ENCODE measurements at regions of chr3 and their contacts with region 1.

Region 1: DNA sequence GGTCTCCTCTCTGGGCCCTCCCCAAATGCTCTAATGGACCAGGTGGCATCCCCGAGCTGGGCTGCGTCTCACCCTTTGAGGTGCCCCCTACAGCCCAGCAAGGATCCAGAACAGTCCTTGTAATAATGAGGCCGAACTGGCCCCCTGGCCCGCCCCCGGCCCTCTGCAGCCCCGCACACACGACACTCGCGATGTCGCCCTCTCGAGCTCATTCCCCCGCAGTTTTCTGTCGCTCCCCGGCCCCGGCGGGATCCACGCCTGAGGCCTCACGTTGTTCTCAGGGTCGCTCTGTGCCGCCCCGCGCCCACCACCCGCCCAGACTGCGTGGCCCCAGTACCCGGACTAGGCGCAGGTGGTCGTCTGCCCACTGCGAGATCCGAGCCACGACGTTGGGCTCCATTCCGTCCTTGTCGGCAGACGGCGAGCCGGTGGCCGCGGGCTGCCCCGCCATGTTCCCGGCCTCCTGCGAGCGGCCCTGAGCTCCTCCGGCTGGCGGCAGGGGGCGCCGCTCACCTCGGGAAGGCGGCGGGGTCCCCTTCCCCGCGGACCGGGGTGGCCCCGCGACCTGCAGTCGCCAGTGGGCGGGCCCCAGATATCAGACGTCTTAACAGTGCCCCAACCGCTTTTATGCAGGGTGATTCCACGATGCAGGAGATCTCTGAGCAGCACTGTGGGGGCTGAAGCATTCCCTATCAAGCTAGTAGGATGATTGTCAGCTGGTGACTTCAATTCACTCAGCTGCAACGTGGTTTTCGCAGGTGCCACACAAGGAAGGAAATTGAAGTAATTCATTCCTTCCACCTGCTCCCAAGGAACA is at the start of gene C3orf33:
- DNase-seq: no peak
- ATAC-seq: peak; percentile 99
- H3K4me3 ChIP-seq: peak within 1 kb of the TSS; percentile 68
- H3K27ac ChIP-seq: 0 out of 2 replicates have a peak within 1 kb of the TSS, but pooled peaks have one; percentile 56
- H3K4me1 ChIP-seq: peaks cover 3% of the 10 kb centered on the region; the same call in 1 of the 2 replicates
- H3K27me3 ChIP-seq: no peaks in the 10 kb centered on the region; a peak in 1 of 4 replicates
- CTCF ChIP-seq: peak; percentile 84 to 96 (median 86)
- EP300 ChIP-seq: no peak
- POLR2A ChIP-seq: peak; percentile 90
- RAD21 ChIP-seq: peak; percentile 73
- polyA plus RNA-seq, gene C3orf33: 0.35 to 1.7 TPM

Region 2: DNA sequence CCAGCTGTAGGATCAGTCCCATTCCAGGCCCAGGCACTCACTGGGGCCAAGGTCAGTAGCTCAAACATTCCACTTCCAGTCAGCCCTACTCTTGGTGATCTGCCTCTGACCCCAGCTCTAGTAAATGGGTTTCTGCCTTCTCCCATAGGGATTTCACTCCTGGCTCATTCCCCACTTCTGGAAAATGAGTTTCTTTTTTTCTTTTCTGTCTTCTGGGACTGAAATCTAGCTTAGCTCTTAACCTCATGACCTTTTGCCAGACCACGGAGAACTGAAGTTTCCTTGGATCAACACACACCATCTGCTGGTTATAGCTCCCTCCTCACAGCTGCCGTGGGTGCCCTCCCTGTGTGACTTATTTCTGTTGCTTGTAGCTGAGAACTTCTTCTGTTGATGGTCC is 704.6 kb before region 1 on chr3:
- CTCF ChIA-PET with region 1: no interaction called
- POLR2A ChIA-PET with region 1: no interaction called
- RAD21 ChIA-PET with region 1: no interaction called
- SMC1A ChIA-PET with region 1: no interaction called
- in situ Hi-C with region 1: no loop called
- intact Hi-C with region 1: no loop called
- DNase-seq: no peak
- ATAC-seq: no peak
- H3K4me3 ChIP-seq: no peak overlapping the region
- H3K27ac ChIP-seq: no peak overlapping the region
- H3K4me1 ChIP-seq: no peaks in the 10 kb centered on the region
- H3K27me3 ChIP-seq: no peaks in the 10 kb centered on the region
- CTCF ChIP-seq: no peak
- EP300 ChIP-seq: no peak
- POLR2A ChIP-seq: no peak
- RAD21 ChIP-seq: no peak

Region 3: DNA sequence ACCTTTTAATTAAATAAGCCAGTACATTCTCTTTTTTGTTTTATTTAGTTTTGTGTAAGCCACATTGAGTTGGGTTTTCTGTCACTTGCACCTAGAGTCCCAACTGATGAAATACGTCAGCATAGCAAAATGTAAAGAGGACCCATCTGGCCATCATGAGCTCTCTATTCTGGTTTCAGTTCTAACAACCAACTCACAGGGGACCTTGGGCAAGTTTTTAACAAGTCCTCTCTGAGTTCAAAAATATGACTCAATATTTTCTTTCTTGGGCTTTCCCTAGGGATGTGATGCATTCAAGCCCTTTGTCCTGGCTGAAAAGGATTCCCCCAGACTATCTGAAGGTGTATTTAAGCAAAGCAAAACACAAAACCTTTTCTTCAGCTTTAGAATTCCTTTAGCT is 94.0 kb before region 1 on chr3:
- CTCF ChIA-PET with region 1: interaction called, 16 read pairs
- POLR2A ChIA-PET with region 1: interaction called, 4 read pairs
- RAD21 ChIA-PET with region 1: no interaction called
- SMC1A ChIA-PET with region 1: no interaction called
- in situ Hi-C with region 1: no loop called
- intact Hi-C with region 1: no loop called
- DNase-seq: peak; percentile 21
- ATAC-seq: peak; percentile 97
- H3K4me3 ChIP-seq: no peak overlapping the region
- H3K27ac ChIP-seq: no peak overlapping the region
- H3K4me1 ChIP-seq: no peaks in the 10 kb centered on the region
- H3K27me3 ChIP-seq: no peaks in the 10 kb centered on the region
- CTCF ChIP-seq: no peak
- EP300 ChIP-seq: peak in 1 of 2 experiments; percentile 68; a peak in 1 of 4 replicates
- POLR2A ChIP-seq: no peak
- RAD21 ChIP-seq: no peak

Region 4: GRCh38 chr3:155772801-155773200 is 33.2 kb before region 1 on chr3:
- CTCF ChIA-PET with region 1: interaction called, 12 read pairs
- POLR2A ChIA-PET with region 1: interaction called, 3 read pairs
- RAD21 ChIA-PET with region 1: interaction called, 4 read pairs
- SMC1A ChIA-PET with region 1: interaction called, 3 read pairs
- in situ Hi-C with region 1: no loop called
- intact Hi-C with region 1: no loop called
- DNase-seq: no peak
- ATAC-seq: no peak
- H3K4me3 ChIP-seq: no peak overlapping the region
- H3K27ac ChIP-seq: no peak overlapping the region
- H3K4me1 ChIP-seq: no peaks in the 10 kb centered on the region
- H3K27me3 ChIP-seq: no peaks in the 10 kb centered on the region
- CTCF ChIP-seq: no peak
- EP300 ChIP-seq: no peak
- POLR2A ChIP-seq: no peak
- RAD21 ChIP-seq: no peak

Region 5: GRCh38 chr3:155846119-155846518 is 40.1 kb after region 1 on chr3:
- CTCF ChIA-PET with region 1: interaction called, 52 read pairs
- POLR2A ChIA-PET with region 1: interaction called, 3 read pairs
- RAD21 ChIA-PET with region 1: interaction called, 14 read pairs
- SMC1A ChIA-PET with region 1: interaction called, 6 read pairs
- in situ Hi-C with region 1: no loop called
- intact Hi-C with region 1: no loop called
- DNase-seq: no peak
- ATAC-seq: peak; percentile 63
- H3K4me3 ChIP-seq: 0 out of 2 replicates have a peak overlapping the region, but pooled peaks have one; percentile 32
- H3K27ac ChIP-seq: no peak overlapping the region
- H3K4me1 ChIP-seq: peaks cover 11% of the 10 kb centered on the region
- H3K27me3 ChIP-seq: no peaks in the 10 kb centered on the region
- CTCF ChIP-seq: no peak
- EP300 ChIP-seq: no peak
- POLR2A ChIP-seq: no peak
- RAD21 ChIP-seq: no peak

Region 6: GRCh38 chr3:155859859-155860258 is 53.8 kb after region 1 on chr3:
- CTCF ChIA-PET with region 1: interaction called, 70 read pairs
- POLR2A ChIA-PET with region 1: interaction called, 3 read pairs
- RAD21 ChIA-PET with region 1: interaction called, 18 read pairs
- SMC1A ChIA-PET with region 1: interaction called, 13 read pairs
- in situ Hi-C with region 1: no loop called
- intact Hi-C with region 1: loop called (anchors 2 kb)
- DNase-seq: no peak
- ATAC-seq: peak; percentile 75
- H3K4me3 ChIP-seq: no peak overlapping the region
- H3K27ac ChIP-seq: no peak overlapping the region
- H3K4me1 ChIP-seq: no peaks in the 10 kb centered on the region
- H3K27me3 ChIP-seq: no peaks in the 10 kb centered on the region
- CTCF ChIP-seq: peak; percentile 18 to 55 (median 30); a peak in 4 of 6 replicates
- EP300 ChIP-seq: no peak
- POLR2A ChIP-seq: no peak
- RAD21 ChIP-seq: peak; percentile 47; the same call in 1 of the 2 replicates

Region 7: GRCh38 chr3:155880286-155880685 is 74.3 kb after region 1 on chr3:
- CTCF ChIA-PET with region 1: interaction called, 10 read pairs
- POLR2A ChIA-PET with region 1: no interaction called
- RAD21 ChIA-PET with region 1: no interaction called
- SMC1A ChIA-PET with region 1: interaction called, 3 read pairs
- in situ Hi-C with region 1: no loop called
- intact Hi-C with region 1: no loop called
- DNase-seq: no peak
- ATAC-seq: peak; percentile 79
- H3K4me3 ChIP-seq: peak overlapping the region; percentile 15; the same call in 1 of the 2 replicates
- H3K27ac ChIP-seq: no peak overlapping the region
- H3K4me1 ChIP-seq: peaks cover 8% of the 10 kb centered on the region
- H3K27me3 ChIP-seq: no peaks in the 10 kb centered on the region
- CTCF ChIP-seq: no peak
- EP300 ChIP-seq: peak in 1 of 2 experiments; percentile 32; a peak in 1 of 4 replicates
- POLR2A ChIP-seq: no peak
- RAD21 ChIP-seq: no peak

Region 8: GRCh38 chr3:155921486-155921885 is 115.5 kb after region 1 on chr3:
- CTCF ChIA-PET with region 1: interaction called, 10 read pairs
- POLR2A ChIA-PET with region 1: no interaction called
- RAD21 ChIA-PET with region 1: no interaction called
- SMC1A ChIA-PET with region 1: interaction called, 4 read pairs
- in situ Hi-C with region 1: no loop called
- intact Hi-C with region 1: no loop called
- DNase-seq: no peak
- ATAC-seq: no peak
- H3K4me3 ChIP-seq: no peak overlapping the region
- H3K27ac ChIP-seq: no peak overlapping the region
- H3K4me1 ChIP-seq: no peaks in the 10 kb centered on the region
- H3K27me3 ChIP-seq: no peaks in the 10 kb centered on the region
- CTCF ChIP-seq: no peak
- EP300 ChIP-seq: no peak
- POLR2A ChIP-seq: no peak
- RAD21 ChIP-seq: no peak